Activated CD4-positive, alpha-beta T cell treated with anti-CD3 and anti-CD28 coated beads, Interleukin-2, amount 10 ng/mL, durations not matched to agents 7 days and 5 days (primary cell): ENCODE measurements at regions of chr12 and their contacts with region 1.

Region 1: GRCh38 chr12:112046003-112046402 is 32.8 kb downstream of the ERP29 start:
- DNase-seq: no peak
- H3K4me3 Mint-ChIP-seq: no peak overlapping the region
- H3K27ac Mint-ChIP-seq: no peak overlapping the region
- H3K4me1 Mint-ChIP-seq: no peaks in the 10 kb centered on the region
- H3K27me3 Mint-ChIP-seq: no peaks in the 10 kb centered on the region

Region 2: DNA sequence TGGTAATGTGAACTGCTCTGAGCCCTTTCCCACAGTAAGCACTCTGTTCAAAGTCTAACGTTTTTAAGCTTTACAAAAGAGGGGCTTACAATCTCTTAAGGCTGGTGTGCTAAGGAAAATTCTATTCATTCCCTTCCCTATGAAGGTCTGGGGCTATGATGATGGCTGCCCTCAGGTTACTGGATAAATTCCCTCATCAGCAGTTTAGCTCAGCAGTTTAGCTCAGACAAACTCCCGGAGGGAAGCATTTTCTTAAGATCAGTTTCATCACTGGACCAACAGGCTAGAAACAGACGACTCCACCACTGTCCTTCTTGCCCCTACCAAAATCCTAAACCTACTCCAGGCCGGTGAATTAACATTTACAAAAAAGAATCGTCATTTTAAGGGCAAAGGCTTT is 13.7 kb before region 1 on chr12:
- CTCF ChIA-PET with region 1: interaction called, 11 read pairs
- POLR2A ChIA-PET with region 1: no interaction called
- DNase-seq: no peak
- H3K4me3 Mint-ChIP-seq: no peak overlapping the region
- H3K27ac Mint-ChIP-seq: no peak overlapping the region
- H3K4me1 Mint-ChIP-seq: peaks cover 4% of the 10 kb centered on the region
- H3K27me3 Mint-ChIP-seq: no peaks in the 10 kb centered on the region